ENCODE measurements at regions of chr9 and their contacts with region 1.

Region 1: DNA sequence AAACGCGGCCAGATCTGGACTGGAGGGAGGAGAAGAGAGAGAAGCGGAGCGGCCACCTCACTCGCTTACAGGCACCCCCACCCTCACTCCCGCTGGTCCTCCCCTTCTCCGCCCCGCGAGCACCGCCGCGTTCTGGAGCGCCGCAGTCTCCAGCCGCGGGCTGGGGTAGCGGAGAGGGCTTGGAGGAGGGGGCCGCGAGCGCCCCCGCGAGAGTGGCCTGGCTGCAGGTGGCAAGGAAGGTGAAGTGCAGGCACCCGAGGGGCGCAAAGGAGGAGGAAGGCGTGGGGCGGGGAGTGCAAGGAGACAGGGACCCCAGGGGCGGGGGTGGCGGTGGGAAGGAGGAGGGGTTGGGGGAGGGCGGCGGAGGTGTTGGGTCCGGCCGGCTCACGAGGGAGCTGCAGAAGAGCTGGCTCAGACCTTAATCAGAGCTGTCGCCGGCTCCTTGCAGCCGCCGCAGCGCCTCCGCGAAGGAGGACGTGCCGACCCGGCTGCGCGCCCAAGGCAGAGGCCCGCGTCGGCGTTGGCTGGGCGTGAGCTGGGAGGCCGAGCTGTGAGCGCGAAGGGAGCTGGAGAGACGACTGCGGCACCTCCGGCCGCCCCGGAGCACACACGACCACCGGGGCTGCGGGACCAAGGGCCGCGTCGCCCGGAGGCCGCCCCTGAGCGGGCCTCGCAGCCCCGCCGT is at the start of gene DMRT3:
- H3K4me3 ChIP-seq: peak within 1 kb of the TSS; percentile 68
- H3K27ac ChIP-seq: peak within 1 kb of the TSS; percentile 74
- H3K4me1 ChIP-seq: no peaks in the 10 kb centered on the region; the same call in 1 of the 2 replicates
- CTCF ChIP-seq: peak; percentile 87

Region 2: DNA sequence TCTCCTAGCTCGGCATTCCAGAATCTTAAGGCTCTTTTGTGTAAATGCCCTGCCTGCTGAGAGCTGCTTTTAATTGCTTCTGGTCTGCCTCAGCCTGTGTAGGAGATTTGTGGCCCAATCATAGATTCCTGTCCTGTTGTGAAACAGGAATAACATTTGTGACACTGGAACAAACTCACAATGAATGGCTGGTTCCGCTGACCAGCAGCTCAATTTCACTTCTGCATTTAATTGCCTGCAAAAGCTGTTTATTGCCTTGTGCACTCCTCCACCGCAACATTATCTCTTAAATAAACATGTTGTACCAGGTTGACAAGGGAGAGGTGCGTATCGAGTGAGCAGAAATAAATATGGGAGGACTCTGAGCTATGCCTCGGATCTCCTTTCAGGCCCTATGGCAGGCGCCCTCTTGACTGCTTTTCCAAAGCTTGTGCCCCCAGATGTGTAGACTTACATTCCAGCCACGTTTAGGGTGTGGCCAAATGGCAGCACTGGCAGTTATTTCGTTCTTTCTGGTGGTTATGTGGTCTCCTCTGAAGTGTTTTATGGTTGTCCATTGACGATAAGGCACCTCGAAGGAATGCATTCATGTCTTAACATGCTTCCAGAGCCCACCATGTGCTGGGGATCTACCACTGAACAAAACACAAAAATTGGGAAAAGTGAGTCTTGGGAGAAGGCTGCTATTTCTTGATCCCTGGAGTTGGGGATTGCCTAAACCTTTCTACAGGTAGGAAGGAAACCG is 76.8 kb before region 1 on chr9:
- CTCF ChIA-PET with region 1: interaction called, 10 read pairs
- POLR2A ChIA-PET with region 1: interaction called, 18 read pairs
- H3K4me3 ChIP-seq: no peak overlapping the region
- H3K27ac ChIP-seq: peak overlapping the region; percentile 77
- H3K4me1 ChIP-seq: peaks cover 14% of the 10 kb centered on the region
- CTCF ChIP-seq: no peak

Region 3: GRCh38 chr9:994005-994404 is 17.6 kb after region 1 on chr9:
- CTCF ChIA-PET with region 1: interaction called, 28 read pairs
- POLR2A ChIA-PET with region 1: no interaction called
- H3K4me3 ChIP-seq: no peak overlapping the region
- H3K27ac ChIP-seq: no peak overlapping the region
- H3K4me1 ChIP-seq: 0 out of 2 replicates have a peak, but pooled peaks cover under 1% of the 10 kb centered on the region
- CTCF ChIP-seq: no peak

Measured in HEK293 (cell line).